PC-3 (cell line): ENCODE measurements at regions of chr9 and their contacts with region 1.

Region 1: DNA sequence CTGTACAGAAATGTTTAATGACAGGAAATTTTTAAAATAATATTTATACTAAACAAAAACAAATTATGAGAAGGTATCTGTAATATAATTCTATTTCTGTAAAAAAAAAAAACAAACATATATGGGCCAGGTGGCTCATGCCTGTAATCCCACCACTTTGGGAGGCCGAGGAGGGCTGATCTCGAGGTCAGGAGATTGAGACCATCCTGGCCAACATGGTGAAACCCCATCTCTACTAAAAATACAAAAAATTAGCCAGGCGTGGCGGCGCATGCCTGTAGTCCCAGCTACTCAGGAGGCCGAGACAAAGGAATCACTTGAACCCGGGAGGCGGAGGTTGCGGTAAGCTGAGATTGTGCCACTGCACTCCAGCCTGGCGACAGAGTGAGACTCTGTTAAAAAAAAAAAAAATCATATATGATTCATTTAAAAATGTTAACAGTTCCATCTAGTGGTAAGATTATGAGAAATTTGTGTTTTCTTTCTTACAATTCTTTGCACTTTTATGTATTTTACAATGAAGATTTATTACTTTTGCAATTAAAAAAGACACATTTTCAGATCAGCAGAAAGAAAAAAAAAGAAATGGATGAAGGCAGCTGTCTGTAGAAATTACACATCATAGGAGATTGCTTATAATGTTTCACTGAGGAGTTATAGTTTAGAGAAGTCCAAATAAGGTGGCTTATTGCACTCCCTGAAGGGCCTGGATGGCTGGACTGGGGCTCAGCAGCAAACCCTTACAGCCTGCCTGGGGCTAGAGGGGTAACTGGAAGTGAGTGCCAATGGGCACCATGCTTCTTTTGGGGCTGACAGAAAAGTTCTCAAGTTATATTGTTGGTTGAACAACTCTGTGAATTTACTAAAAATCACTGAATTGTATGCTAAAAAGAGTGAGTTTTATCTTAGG is 20.3 kb downstream of the C9orf153 start:
- DNase-seq: peak; percentile 35
- ATAC-seq: peak; percentile 24; the same call in 1 of the 2 replicates
- H3K4me3 ChIP-seq: no peak overlapping the region
- H3K27ac ChIP-seq: no peak overlapping the region
- H3K4me1 ChIP-seq: no peaks in the 10 kb centered on the region
- H3K27me3 ChIP-seq: no peaks in the 10 kb centered on the region
- CTCF ChIP-seq: peak; percentile 39; the same call in 1 of the 2 replicates

Region 2: DNA sequence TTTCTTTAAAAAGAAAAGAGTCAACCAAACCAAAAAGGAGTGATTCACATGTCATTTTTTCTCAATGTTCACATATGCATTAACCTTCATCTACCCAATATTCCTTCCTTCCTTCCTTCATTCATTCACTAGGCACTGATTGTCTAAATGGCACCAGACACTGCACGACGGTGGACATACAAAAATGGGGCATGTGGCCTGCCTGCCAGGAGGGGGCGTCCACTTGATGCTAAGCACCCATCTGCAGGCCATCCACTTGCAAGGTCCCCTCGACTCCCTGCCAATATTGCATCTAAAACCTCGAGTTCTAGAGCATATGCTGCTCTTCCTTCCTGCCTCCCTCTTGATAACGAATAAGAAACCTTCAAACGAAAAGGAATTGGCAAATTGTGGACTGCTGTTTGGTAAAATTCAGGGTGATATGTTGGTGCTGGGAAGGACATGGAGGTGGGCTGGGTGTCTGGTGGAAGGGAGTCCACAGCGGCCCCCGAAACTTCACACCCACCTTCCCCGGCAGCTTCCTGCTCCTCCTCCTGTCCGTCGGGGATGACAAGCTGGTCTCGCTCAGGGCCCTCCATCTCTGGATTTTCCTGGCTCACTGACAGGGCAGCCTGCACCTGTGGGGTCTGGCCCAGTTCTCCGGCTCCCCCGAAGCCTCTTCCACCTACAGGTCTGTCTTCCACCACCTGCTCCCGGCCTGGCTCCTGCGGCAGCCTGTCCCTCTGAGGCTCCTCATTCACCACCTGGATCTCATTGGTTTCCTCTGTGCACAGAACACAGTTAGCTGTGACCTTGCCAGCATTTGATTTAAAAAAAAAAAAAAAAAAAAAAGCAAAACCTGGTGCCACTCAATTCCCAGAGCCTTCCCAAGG is 204.0 kb before region 1 on chr9:
- CTCF ChIA-PET with region 1: no interaction called
- POLR2A ChIA-PET with region 1: no interaction called
- intact Hi-C with region 1: loop called (anchors 2 kb)
- DNase-seq: peak; percentile 42
- ATAC-seq: peak; percentile 69
- H3K4me3 ChIP-seq: no peak overlapping the region
- H3K27ac ChIP-seq: no peak overlapping the region
- H3K4me1 ChIP-seq: no peaks in the 10 kb centered on the region
- H3K27me3 ChIP-seq: no peaks in the 10 kb centered on the region
- CTCF ChIP-seq: peak; percentile 68

Region 3: DNA sequence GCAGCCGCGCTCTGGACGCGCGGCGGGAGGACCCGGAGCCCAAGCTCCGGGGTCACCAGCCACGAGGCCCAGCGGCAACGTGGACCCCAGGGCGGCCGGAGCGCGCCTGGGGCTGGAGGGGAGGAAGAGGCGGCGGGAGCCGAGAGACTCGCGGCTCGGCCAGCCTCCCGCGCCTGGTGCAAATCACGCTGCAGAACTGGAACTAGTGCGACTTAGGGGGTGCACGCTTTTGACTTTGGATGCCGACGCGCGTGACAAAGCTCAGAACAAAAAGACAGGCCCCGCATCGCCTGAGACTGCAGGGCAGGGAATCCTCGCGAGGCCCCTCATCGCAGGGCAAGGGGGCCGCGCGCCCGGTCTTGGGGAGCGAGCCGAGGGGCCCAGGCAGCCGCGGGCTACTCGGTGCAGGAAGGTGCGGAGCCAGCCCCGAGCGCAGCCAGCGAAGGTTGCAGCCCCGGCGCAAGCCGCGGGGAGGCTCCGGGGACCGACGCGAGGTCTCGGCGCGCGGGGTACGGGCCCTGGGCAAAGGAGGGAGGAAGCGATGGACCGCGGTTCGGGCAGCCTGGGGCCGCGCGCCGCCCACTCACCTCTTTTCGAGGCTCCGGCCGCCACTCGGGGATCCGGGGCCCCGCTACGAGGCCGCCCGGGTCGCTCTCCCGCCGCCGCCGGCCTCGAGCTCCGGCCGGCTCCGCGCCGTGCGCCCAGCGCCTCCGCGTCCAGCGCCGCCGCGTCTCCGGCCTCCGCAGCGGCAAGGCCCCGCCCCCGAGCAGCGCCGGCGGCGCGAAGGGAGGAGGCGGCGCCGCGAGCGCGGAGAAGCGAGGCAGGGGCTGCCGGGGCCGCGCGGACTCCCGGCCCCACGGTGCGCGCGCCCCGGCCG is 140.1 kb before region 1 on chr9 and contains the start of gene GOLM1:
- CTCF ChIA-PET with region 1: no interaction called
- POLR2A ChIA-PET with region 1: no interaction called
- intact Hi-C with region 1: no loop called
- DNase-seq: peak; percentile 63
- ATAC-seq: peak; percentile 80
- H3K4me3 ChIP-seq: peak within 1 kb of the TSS; percentile 95
- H3K27ac ChIP-seq: peak within 1 kb of the TSS; percentile 39
- H3K4me1 ChIP-seq: peaks cover 21% of the 10 kb centered on the region
- H3K27me3 ChIP-seq: no peaks in the 10 kb centered on the region
- CTCF ChIP-seq: no peak
- total RNA-seq, gene GOLM1: 55.8 and 56.2 TPM in 2 replicates

Region 4: GRCh38 chr9:86126998-86127972 is 111.8 kb before region 1 on chr9:
- CTCF ChIA-PET with region 1: interaction called, 10 read pairs
- POLR2A ChIA-PET with region 1: no interaction called
- intact Hi-C with region 1: no loop called
- DNase-seq: peak; percentile 87
- ATAC-seq: peak; percentile 95
- H3K4me3 ChIP-seq: peak overlapping the region; percentile 31; the same call in 1 of the 2 replicates
- H3K27ac ChIP-seq: peak overlapping the region; percentile 59
- H3K4me1 ChIP-seq: peaks cover 28% of the 10 kb centered on the region
- H3K27me3 ChIP-seq: no peaks in the 10 kb centered on the region
- CTCF ChIP-seq: no peak

Region 5: GRCh38 chr9:86202338-86202882 is 36.7 kb before region 1 on chr9:
- CTCF ChIA-PET with region 1: interaction called, 3 read pairs
- POLR2A ChIA-PET with region 1: no interaction called
- intact Hi-C with region 1: loop called (anchors 1 kb)
- DNase-seq: peak; percentile 59
- ATAC-seq: peak; percentile 82
- H3K4me3 ChIP-seq: no peak overlapping the region
- H3K27ac ChIP-seq: no peak overlapping the region
- H3K4me1 ChIP-seq: no peaks in the 10 kb centered on the region
- H3K27me3 ChIP-seq: no peaks in the 10 kb centered on the region
- CTCF ChIP-seq: peak; percentile 76